HepG2 (cell line): ENCODE measurements at regions of chr7 and their contacts with region 1.

Region 1: GRCh38 chr7:106176414-106177299 is 64.5 kb upstream of the SYPL1 start:
- DNase-seq: peak; percentile 44
- ATAC-seq: peak; percentile 96
- H3K4me3 ChIP-seq: no peak overlapping the region
- H3K27ac ChIP-seq: no peak overlapping the region
- H3K4me1 ChIP-seq: no peaks in the 10 kb centered on the region
- H3K27me3 ChIP-seq: peaks cover 0 to 22% of the 10 kb centered on the region in 2 experiments; a peak in 3 of 5 replicates
- CTCF ChIP-seq: peak; percentile 98
- EP300 ChIP-seq: no peak
- POLR2A ChIP-seq: no peak
- RAD21 ChIP-seq: peak; percentile 95

Region 2: GRCh38 chr7:106153891-106154449 is 22.7 kb before region 1 on chr7:
- CTCF ChIA-PET with region 1: no interaction called
- POLR2A ChIA-PET with region 1: no interaction called
- in situ Hi-C with region 1: no loop called
- intact Hi-C with region 1: no loop called
- DNase-seq: peak; percentile 54
- ATAC-seq: peak; percentile 98
- H3K4me3 ChIP-seq: no peak overlapping the region
- H3K27ac ChIP-seq: no peak overlapping the region
- H3K4me1 ChIP-seq: peaks cover 13% of the 10 kb centered on the region
- H3K27me3 ChIP-seq: peaks cover 2 to 19% of the 10 kb centered on the region in 2 experiments; a peak in 3 of 5 replicates
- CTCF ChIP-seq: peak; percentile 95
- EP300 ChIP-seq: no peak
- POLR2A ChIP-seq: no peak
- RAD21 ChIP-seq: peak; percentile 93

Region 3: DNA sequence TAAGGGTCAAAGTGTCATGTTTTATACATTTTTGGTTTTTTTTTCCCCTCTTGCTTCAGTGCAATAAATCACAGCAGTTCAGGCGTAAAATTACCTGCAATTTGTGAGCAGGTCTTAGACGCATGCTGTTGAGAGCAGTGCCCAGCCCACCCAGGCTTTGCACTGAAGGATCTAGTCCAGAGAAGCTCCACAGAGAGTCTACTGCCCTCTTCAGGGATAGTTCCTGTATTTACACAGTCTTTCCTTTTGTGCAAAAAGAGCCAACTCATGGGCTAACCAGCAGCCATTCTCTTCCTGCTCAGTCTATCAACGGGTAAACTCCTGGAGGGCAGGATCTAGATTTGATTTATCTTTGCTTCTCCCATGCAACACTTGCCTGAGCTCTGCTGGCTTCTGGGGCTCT is 190.4 kb after region 1 on chr7:
- CTCF ChIA-PET with region 1: interaction called, 4 read pairs
- POLR2A ChIA-PET with region 1: no interaction called
- in situ Hi-C with region 1: loop called (anchors 5 kb)
- intact Hi-C with region 1: loop called (anchors 1 kb)
- DNase-seq: peak; percentile 20
- ATAC-seq: peak; percentile 93
- H3K4me3 ChIP-seq: no peak overlapping the region
- H3K27ac ChIP-seq: no peak overlapping the region
- H3K4me1 ChIP-seq: no peaks in the 10 kb centered on the region
- H3K27me3 ChIP-seq: peaks cover 0 to 9% of the 10 kb centered on the region in 2 experiments; a peak in 1 of 5 replicates
- CTCF ChIP-seq: peak; percentile 60
- EP300 ChIP-seq: no peak
- POLR2A ChIP-seq: no peak
- RAD21 ChIP-seq: peak; percentile 17; the same call in 1 of the 2 replicates

Region 4: DNA sequence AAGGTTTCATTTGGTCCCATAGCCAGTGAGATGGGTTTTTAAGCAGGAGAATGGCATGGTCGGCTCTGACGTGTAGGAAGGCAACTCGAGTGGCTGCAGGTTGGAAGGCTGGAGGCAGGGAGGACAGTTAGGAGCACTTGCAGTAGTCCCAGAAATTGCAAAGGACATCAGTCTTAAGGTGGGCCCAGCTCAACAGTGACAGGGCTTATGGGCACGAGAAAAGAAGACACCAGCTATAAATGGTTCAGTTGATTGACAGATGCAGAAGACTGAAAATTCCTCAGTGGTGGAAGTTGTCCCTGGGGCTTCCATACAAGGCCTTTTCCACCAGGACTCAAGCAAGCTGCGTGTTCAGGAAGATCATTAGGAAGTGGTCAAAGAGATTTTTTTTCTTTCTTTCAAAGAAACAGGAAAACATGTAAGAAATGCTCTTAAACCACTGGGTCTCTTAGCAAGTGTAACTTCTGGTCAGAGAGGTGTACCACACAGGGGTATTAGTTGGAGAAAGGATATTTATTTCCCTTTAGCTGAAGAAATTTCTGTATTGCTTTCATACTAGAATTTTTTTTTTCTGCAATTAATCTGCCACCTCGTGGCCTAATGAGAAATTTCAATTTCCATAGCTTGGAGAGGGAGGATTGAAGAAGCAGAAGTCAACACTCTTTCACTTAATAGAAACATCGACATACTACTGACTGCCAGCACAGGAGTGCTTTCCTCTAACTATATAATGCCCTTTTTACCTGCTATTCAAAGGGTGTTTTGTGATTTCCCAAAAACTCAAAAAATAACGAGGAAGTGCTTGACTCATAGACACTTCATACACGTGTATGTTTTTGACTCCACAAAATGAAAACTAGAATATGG is 285.6 kb after region 1 on chr7:
- CTCF ChIA-PET with region 1: interaction called, 65 read pairs
- POLR2A ChIA-PET with region 1: interaction called, 3 read pairs
- in situ Hi-C with region 1: loop called (anchors 5 kb)
- intact Hi-C with region 1: loop called (anchors 1 kb)
- DNase-seq: peak; percentile 10
- ATAC-seq: no peak
- H3K4me3 ChIP-seq: no peak overlapping the region
- H3K27ac ChIP-seq: no peak overlapping the region
- H3K4me1 ChIP-seq: no peaks in the 10 kb centered on the region
- H3K27me3 ChIP-seq: no peaks in the 10 kb centered on the region; a peak in 1 of 5 replicates
- CTCF ChIP-seq: peak; percentile 41
- EP300 ChIP-seq: no peak
- POLR2A ChIP-seq: no peak
- RAD21 ChIP-seq: no peak

Region 5: DNA sequence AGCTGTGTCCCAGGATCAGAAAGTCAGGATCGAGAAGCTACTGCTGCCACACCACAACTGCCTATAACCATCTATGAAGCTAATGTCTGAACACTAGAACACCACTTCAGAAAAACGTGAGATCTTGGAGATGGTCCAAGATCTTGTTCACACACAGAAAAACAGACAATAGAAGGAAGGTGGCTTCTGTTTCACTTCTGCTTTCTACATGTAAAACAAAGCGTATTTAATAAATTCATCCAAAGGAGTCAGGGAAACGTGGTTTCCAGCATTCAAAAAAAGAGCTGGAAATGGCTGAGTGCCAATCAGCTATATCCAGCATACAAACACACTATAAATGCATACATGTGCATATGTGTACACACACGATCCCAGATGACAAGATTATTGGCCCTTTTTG is 554.5 kb after region 1 on chr7:
- CTCF ChIA-PET with region 1: no interaction called
- POLR2A ChIA-PET with region 1: no interaction called
- in situ Hi-C with region 1: loop called (anchors 5 kb)
- intact Hi-C with region 1: loop called (anchors 2 kb)
- DNase-seq: no peak
- ATAC-seq: no peak
- H3K4me3 ChIP-seq: no peak overlapping the region
- H3K27ac ChIP-seq: no peak overlapping the region
- H3K4me1 ChIP-seq: no peaks in the 10 kb centered on the region
- H3K27me3 ChIP-seq: no peaks in the 10 kb centered on the region
- CTCF ChIP-seq: no peak
- EP300 ChIP-seq: no peak
- POLR2A ChIP-seq: no peak
- RAD21 ChIP-seq: no peak

Region 6: GRCh38 chr7:106736508-106737201 is 560.0 kb after region 1 on chr7:
- CTCF ChIA-PET with region 1: no interaction called
- POLR2A ChIA-PET with region 1: no interaction called
- in situ Hi-C with region 1: loop called (anchors 5 kb)
- intact Hi-C with region 1: loop called (anchors 2 kb)
- DNase-seq: peak; percentile 28
- ATAC-seq: peak; percentile 86
- H3K4me3 ChIP-seq: no peak overlapping the region
- H3K27ac ChIP-seq: no peak overlapping the region
- H3K4me1 ChIP-seq: no peaks in the 10 kb centered on the region
- H3K27me3 ChIP-seq: no peaks in the 10 kb centered on the region
- CTCF ChIP-seq: peak; percentile 56
- EP300 ChIP-seq: no peak
- POLR2A ChIP-seq: no peak
- RAD21 ChIP-seq: no peak